ENCODE measurements at regions of chrX and their contacts with region 1.

Region 1: GRCh38 chrX:119622356-119623232 is 16.4 kb upstream of the NKRF start:
- DNase-seq: no peak
- H3K4me3 ChIP-seq: no peak overlapping the region
- H3K27ac ChIP-seq: no peak overlapping the region
- H3K4me1 ChIP-seq: peaks cover 31% of the 10 kb centered on the region
- CTCF ChIP-seq: no peak

Region 2: DNA sequence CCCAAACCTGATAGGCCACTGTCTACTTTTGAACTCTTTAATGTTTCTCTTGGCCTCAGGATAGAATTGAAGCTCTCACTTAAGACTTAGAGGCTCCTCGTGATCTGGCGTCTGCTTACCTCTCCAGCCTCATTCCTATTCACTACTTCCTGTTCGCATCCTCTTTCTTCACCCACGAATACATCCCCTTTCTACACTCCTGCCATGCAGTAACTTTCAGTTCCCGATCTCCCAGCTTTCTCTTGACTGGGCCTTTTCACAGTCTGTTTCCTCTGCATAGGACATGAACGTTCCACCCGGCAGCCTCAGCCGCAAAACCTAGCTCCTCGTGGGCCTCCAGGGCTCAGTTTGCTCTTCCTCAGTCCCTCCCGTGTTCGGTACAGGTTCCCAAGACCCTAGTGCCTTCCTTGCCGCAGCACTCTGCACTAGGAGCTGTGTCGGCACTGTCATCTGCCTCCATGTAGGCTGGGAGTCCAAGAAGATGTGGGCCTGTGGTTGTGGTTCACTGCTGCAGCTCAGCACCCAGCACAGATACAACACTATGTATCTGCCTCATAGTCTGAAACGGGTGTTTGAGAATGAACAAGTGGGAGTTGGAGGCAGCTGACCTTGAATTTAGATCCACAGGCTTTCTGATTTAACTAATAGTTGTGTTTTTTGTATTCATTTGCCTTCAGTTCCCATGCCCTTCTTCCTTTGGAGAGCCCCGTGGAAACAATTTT is 153.1 kb after region 1 on chrX:
- CTCF ChIA-PET with region 1: no interaction called
- POLR2A ChIA-PET with region 1: no interaction called
- intact Hi-C with region 1: loop called (anchors 5 kb)
- DNase-seq: peak; percentile 34
- H3K4me3 ChIP-seq: peak overlapping the region; percentile 29
- H3K27ac ChIP-seq: peak overlapping the region; percentile 51
- H3K4me1 ChIP-seq: peaks cover 10% of the 10 kb centered on the region
- CTCF ChIP-seq: no peak